ENCODE measurements at regions of chr2 and their contacts with region 1.

Region 1: GRCh38 chr2:27086090-27086723 is 365 bp upstream of the KHK start:
- DNase-seq: peak; percentile 96
- ATAC-seq: peak; percentile 90
- H3K4me3 Mint-ChIP-seq: peak overlapping the region; percentile 82
- H3K27ac Mint-ChIP-seq: peak overlapping the region; percentile 84
- H3K4me1 Mint-ChIP-seq: peaks cover 21% of the 10 kb centered on the region
- H3K27me3 Mint-ChIP-seq: no peaks in the 10 kb centered on the region
- CTCF ChIP-seq: peak; percentile 92

Region 2: DNA sequence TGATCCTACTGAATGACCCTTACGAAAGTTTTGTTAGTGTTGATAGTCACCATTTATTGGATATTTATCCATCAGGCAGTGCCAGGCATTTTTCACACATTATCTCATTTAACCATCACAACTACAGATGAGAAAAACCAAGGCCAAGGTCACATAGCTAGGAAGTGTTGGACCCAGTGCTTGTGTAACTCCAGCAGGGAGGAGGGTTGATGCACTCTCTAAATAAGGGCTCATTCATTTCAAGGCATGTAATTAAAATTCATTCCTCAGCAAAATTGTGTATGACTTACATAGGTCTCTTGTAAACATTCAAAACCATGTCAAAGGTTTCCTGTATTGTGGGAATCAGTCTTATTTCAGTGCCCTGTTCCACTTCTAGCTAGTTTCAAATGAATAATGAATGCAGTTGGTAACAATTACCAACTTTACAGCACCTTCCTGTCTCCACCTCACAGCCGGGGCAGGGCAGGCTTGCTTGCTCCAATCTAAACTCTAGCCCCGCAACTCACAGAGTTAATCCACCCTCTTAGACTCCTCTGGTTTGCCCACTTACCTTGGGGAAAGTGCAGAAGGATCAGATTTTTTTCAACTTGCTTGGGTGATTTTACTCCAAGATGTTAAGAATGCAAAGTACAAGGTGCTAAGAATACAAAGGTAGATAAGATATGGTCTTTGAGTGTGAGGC is 121.6 kb before region 1 on chr2:
- CTCF ChIA-PET with region 1: interaction called, 9 read pairs
- POLR2A ChIA-PET with region 1: no interaction called
- intact Hi-C with region 1: loop called (anchors 5 kb)
- DNase-seq: no peak
- ATAC-seq: no peak
- H3K4me3 Mint-ChIP-seq: no peak overlapping the region
- H3K27ac Mint-ChIP-seq: no peak overlapping the region
- H3K4me1 Mint-ChIP-seq: peaks cover 7% of the 10 kb centered on the region
- H3K27me3 Mint-ChIP-seq: peaks cover 21% of the 10 kb centered on the region
- CTCF ChIP-seq: no peak

Region 3: DNA sequence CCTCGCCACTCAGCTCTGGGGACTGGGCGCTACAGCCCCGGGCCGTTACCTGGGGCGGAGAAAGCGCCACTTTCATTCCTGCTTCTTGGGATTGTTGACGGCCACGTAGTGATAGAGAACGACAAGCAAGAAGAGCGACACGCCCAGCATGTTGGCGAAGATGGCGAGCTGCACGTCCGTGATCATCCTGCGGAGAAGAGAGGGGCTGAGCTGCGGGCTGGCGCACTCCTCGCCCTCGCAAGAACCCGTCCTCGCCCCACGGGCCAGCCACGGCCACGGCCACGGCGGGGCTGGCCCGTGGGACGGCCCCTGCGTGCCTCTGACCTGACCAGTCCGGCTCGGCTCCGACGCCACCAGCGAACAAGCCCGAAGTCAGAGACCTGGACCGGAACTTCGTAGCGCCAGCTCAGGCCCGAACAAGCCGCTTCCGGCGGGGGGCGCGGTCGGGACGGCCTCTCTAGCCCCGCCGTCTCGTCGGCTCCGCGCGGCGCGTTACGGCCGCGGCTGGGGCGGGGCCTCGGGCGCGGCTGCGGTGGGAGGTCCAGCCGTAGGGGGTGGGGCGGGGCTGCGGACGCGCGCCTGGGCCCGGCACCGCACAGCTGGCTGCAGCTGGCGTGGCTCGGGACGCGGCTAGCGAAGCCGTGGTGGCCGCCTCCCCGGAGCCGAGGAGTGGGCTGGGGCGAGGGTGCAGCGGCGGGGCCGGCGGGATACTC is 14.8 kb before region 1 on chr2 and contains the start of gene OST4:
- CTCF ChIA-PET with region 1: interaction called, 26 read pairs
- POLR2A ChIA-PET with region 1: interaction called, 40 read pairs
- intact Hi-C with region 1: no loop called
- DNase-seq: peak; percentile 91
- ATAC-seq: peak; percentile 92
- H3K4me3 Mint-ChIP-seq: peak within 1 kb of the TSS; percentile 98
- H3K27ac Mint-ChIP-seq: peak within 1 kb of the TSS; percentile 95
- H3K4me1 Mint-ChIP-seq: peaks cover 68% of the 10 kb centered on the region
- H3K27me3 Mint-ChIP-seq: no peaks in the 10 kb centered on the region
- CTCF ChIP-seq: no peak
- total RNA-seq, gene OST4: 257 to 262 TPM

Region 4: GRCh38 chr2:27638037-27638637 is 551.9 kb after region 1 on chr2:
- CTCF ChIA-PET with region 1: no interaction called
- POLR2A ChIA-PET with region 1: no interaction called
- intact Hi-C with region 1: no loop called
- DNase-seq: peak; percentile 33
- ATAC-seq: peak; percentile 89
- H3K4me3 Mint-ChIP-seq: peak overlapping the region; percentile 9
- H3K27ac Mint-ChIP-seq: peak overlapping the region; percentile 94
- H3K4me1 Mint-ChIP-seq: peaks cover 34% of the 10 kb centered on the region
- H3K27me3 Mint-ChIP-seq: no peaks in the 10 kb centered on the region
- CTCF ChIP-seq: no peak

Measured in activated CD8-positive, alpha-beta T cell treated with anti-CD3 and anti-CD28 coated beads for 36 hours (primary cell).